ENCODE measurements at regions of chr13 and their contacts with region 1.

Region 1: DNA sequence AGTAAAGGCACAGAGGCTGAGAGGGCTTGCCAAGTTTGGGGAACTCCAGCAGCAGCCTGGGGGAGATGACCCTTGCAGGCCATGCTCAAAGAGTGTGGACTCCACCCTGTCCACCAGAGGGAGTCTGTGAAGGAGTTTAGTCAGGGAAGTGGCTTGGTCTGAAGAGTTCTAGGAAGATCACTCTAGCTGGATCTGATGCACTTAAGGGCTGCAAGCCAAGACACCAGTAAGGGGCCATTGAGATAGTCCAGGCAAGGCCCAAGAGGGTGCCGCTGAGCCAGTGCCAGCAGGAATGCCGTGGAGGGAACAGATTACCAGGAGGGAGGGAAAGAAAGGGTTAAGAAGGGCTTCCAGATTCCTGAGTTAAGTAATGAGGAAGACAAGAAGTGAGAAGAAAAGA is 68.7 kb downstream of the ZAR1L start:
- DNase-seq: no peak
- H3K4me3 ChIP-seq: no peak overlapping the region
- CTCF ChIP-seq: peak; percentile 85

Region 2: DNA sequence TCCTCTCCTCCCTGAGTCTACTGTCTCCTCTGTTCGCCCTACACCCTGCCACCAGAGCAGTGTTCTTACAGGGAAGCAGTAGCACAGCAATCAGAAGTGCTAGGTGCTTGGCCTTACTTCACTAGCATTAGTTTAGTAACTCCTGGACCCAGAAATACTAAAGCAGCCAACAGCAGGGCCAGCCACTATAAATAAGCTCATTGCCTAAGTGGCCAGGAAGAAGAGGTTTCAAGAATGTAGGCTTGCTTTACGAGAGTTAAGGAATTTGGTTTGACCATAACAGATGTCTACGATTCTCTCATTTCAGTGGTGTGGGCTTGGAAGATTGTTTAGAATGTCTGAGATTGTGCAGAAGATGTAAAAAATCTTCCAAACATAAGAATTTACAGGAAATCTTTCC is 34.7 kb before region 1 on chr13:
- CTCF ChIA-PET with region 1: interaction called, 12 read pairs
- POLR2A ChIA-PET with region 1: no interaction called
- DNase-seq: peak; percentile 92
- H3K4me3 ChIP-seq: no peak overlapping the region
- CTCF ChIP-seq: no peak

Region 3: DNA sequence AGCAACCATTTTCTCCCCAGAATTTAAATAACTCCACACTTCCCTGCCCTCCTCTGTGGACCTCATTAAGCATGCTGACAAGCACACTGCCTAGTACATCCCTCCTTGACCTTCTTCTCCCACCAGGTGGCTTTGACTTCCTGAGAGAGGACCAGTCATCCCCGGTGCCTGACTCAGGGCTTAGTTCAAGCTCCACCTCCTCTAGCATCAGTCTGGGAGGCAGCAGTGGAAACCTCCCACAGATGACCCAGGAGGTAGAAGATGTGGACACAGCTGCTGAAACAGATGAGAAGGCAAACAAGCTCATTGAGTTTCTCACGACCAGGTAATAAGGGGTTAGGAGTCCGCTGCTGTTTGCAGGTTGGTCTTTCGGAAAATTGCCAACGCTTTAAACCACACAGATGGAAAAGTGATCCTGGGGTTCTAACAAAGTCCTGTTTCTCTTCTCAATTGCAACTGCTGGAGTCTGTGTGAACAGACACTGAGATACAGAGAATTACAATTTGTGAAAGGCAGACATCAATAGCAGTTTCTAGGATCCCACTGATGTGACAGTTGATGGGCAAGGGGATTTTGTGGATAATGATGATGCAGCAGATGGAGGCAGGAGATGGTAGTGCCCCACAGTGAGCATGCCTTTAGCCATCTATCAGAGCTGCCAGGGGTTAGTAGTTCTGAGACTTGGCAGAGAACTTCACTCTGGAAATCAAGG is 18.0 kb before region 1 on chr13:
- CTCF ChIA-PET with region 1: interaction called, 19 read pairs
- POLR2A ChIA-PET with region 1: no interaction called
- DNase-seq: no peak
- H3K4me3 ChIP-seq: no peak overlapping the region
- CTCF ChIP-seq: no peak

Region 4: DNA sequence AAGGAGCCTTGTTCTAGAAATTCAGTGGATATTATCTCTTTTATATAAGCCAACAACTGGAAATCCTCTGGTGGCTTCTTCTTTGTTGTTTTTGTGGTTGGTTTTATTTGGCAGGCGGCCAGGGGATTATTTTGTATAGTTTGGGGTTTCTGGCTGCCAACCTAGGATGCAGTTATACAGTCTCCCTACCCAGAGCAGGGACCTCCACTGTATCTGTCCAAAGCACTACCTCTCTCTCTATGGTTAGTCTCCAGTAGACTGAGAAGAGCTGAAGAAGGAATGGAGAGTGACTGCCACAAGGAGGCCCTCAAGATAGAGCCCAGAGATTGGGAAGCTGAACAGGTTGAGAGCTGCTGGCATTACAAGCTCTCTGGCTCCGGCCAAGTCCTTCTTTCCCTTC is 11.5 kb before region 1 on chr13:
- CTCF ChIA-PET with region 1: interaction called, 33 read pairs
- POLR2A ChIA-PET with region 1: no interaction called
- DNase-seq: no peak
- H3K4me3 ChIP-seq: no peak overlapping the region
- CTCF ChIP-seq: no peak

Region 5: DNA sequence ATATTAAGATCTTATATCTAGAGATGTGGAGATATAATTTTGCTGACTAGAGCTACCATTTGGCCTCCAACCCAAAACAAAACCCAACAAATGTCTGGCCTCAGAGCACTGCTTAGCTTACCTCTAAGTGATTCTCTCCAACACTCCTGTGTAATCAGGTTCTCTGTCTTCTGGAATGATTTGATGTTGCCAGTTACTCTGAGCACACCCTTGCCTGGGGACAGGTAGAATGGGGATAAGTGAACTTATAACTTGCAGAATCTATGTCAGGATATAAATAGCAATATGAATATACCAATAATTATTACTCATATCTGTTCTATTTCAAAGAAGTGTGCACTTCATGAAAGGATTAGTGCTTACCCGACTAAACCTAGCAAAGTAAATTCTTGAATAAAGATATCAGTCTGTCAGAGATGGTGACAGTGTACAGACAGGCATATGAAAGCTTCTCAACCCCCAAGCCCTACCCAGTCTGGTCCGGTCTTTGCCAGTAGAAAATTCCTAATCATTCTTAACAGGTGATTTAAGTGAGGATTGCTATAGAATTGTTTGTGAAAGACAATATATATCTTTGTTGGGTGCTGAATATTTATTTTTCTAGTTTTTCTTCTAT is 35.7 kb after region 1 on chr13:
- CTCF ChIA-PET with region 1: interaction called, 11 read pairs
- POLR2A ChIA-PET with region 1: no interaction called
- DNase-seq: no peak
- H3K4me3 ChIP-seq: no peak overlapping the region
- CTCF ChIP-seq: no peak

Region 6: GRCh38 chr13:32310134-32310706 is 63.8 kb after region 1 on chr13:
- CTCF ChIA-PET with region 1: interaction called, 13 read pairs
- POLR2A ChIA-PET with region 1: no interaction called
- DNase-seq: no peak
- H3K4me3 ChIP-seq: no peak overlapping the region
- CTCF ChIP-seq: peak; percentile 58

Measured in AG04449 (cell line).